A549 (cell line): ENCODE measurements at regions of chr2 and their contacts with region 1.

Region 1: GRCh38 chr2:157302492-157303099 is 23.0 kb downstream of the ERMN start:
- DNase-seq: peak; percentile 31 to 44
- ATAC-seq: peak; percentile 79 to 91; a peak in 5 of 6 replicates
- H3K4me3 ChIP-seq: no peak overlapping the region
- H3K27ac ChIP-seq: no peak overlapping the region
- H3K4me1 ChIP-seq: no peaks in the 10 kb centered on the region
- CTCF ChIP-seq: peak; percentile 93
- EP300 ChIP-seq: no peak
- POLR2A ChIP-seq: no peak
- RAD21 ChIP-seq: peak; percentile 82 to 91

Region 2: GRCh38 chr2:157269922-157270321 is 32.7 kb before region 1 on chr2:
- CTCF ChIA-PET with region 1: interaction called, 12 read pairs
- POLR2A ChIA-PET with region 1: no interaction called
- DNase-seq: no peak
- ATAC-seq: no peak
- H3K4me3 ChIP-seq: no peak overlapping the region
- H3K27ac ChIP-seq: no peak overlapping the region
- H3K4me1 ChIP-seq: no peaks in the 10 kb centered on the region
- CTCF ChIP-seq: no peak
- EP300 ChIP-seq: no peak
- POLR2A ChIP-seq: no peak
- RAD21 ChIP-seq: no peak

Region 3: GRCh38 chr2:157281316-157281715 is 21.3 kb before region 1 on chr2:
- CTCF ChIA-PET with region 1: interaction called, 13 read pairs
- POLR2A ChIA-PET with region 1: no interaction called
- DNase-seq: no peak
- ATAC-seq: no peak
- H3K4me3 ChIP-seq: no peak overlapping the region
- H3K27ac ChIP-seq: no peak overlapping the region
- H3K4me1 ChIP-seq: no peaks in the 10 kb centered on the region
- CTCF ChIP-seq: no peak
- EP300 ChIP-seq: no peak
- POLR2A ChIP-seq: no peak
- RAD21 ChIP-seq: no peak

Region 4: GRCh38 chr2:157291009-157291408 is 11.6 kb before region 1 on chr2:
- CTCF ChIA-PET with region 1: interaction called, 13 read pairs
- POLR2A ChIA-PET with region 1: no interaction called
- DNase-seq: peak in 1 of 2 experiments; percentile 65
- ATAC-seq: peak; percentile 90 to 94
- H3K4me3 ChIP-seq: no peak overlapping the region
- H3K27ac ChIP-seq: peak overlapping the region; percentile 45 to 49; a peak in 4 of 6 replicates
- H3K4me1 ChIP-seq: peaks cover 17% of the 10 kb centered on the region
- CTCF ChIP-seq: no peak
- EP300 ChIP-seq: no peak
- POLR2A ChIP-seq: no peak
- RAD21 ChIP-seq: no peak

Region 5: DNA sequence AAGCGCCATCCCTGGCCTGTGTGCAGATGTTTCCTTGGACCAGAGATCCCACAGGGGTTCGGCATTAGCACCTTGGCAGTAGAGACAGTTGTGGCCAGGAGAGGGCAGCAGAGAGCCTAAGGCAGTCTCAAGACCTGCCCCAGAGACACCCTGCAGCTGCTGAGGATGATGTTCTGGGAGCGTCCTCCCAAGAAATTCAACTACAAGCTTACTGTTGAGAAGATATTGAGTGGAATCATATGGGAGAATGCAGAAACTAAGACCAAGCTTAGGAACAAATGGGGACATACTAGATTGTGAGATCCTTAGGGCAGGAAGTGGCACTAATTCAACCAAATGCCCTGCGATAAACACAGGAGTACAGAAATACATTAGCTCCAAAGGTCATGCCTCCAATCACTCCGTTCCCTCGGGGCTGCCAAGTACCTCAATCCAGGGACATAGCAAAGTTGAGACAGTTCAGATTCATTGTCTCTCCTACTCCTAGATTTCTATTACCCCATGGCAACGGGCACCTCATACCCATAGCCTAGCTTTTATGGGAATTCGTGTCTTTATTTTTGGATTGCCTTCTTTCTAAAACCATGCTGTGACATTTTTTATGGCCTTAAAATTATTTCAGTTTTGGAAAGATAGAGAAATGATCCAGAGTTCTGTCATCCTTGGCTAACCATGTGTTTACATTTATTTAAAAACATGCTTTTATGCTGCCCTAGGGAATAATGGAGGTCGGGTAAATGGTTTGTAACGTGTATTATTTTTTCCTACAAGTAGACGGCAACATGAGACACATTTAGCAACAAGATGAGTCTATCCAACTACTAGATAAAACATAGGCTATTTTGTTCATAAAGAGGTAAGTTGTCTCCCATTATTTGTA is 25.3 kb after region 1 on chr2:
- CTCF ChIA-PET with region 1: interaction called, 101 read pairs
- POLR2A ChIA-PET with region 1: interaction called, 5 read pairs
- DNase-seq: peak; percentile 66 to 78
- ATAC-seq: peak; percentile 98 to 100
- H3K4me3 ChIP-seq: no peak overlapping the region
- H3K27ac ChIP-seq: no peak overlapping the region
- H3K4me1 ChIP-seq: peaks cover 4% of the 10 kb centered on the region; the same call in 1 of the 3 replicates
- CTCF ChIP-seq: peak; percentile 74
- EP300 ChIP-seq: no peak
- POLR2A ChIP-seq: no peak
- RAD21 ChIP-seq: peak; percentile 65 to 66

Region 6: DNA sequence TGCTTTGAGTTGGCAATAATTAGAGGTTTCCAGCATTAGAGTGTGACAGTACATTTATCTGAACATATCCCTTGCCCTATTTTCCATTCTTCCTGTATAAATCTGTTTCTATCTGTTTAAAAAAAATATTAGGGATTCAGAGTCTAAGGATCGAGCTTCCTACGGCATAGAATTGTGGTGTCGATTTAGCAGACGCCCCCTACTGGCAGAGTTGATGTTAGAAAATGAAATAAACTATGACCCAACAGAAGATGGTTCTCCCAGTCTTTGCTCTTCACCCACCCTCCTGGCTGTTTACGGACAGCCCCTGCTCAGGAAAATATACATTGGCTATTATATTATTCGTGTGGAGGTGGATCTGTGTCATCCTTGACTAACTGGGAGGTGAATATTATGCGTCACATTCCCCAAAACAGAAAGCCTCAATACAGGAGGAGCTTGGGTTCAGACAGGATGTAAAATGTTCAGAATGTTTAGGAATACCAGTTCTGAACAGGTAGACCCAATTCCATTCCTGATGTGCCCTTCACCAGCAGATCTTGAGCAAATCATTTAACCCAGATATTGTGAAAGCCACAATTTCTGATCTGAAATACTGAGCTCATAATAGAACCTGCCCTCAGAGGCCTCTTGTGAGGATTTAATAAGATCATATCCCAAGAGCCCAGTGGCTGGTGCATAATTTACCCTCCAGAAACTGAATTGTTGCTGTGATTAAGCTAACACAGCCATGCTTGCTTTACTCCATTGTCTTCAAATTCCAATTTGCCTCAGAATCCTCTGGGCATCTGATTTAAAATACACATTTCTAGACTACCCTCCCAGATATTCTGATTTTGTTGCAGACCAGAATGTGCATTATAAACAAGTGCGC is 33.8 kb after region 1 on chr2:
- CTCF ChIA-PET with region 1: interaction called, 101 read pairs
- POLR2A ChIA-PET with region 1: no interaction called
- DNase-seq: peak in 1 of 2 experiments; percentile 44
- ATAC-seq: peak; percentile 74 to 92; a peak in 5 of 6 replicates
- H3K4me3 ChIP-seq: no peak overlapping the region
- H3K27ac ChIP-seq: no peak overlapping the region
- H3K4me1 ChIP-seq: no peaks in the 10 kb centered on the region
- CTCF ChIP-seq: peak; percentile 75
- EP300 ChIP-seq: no peak
- POLR2A ChIP-seq: no peak
- RAD21 ChIP-seq: peak; percentile 26 to 35; a peak in 2 of 5 replicates

Region 7: DNA sequence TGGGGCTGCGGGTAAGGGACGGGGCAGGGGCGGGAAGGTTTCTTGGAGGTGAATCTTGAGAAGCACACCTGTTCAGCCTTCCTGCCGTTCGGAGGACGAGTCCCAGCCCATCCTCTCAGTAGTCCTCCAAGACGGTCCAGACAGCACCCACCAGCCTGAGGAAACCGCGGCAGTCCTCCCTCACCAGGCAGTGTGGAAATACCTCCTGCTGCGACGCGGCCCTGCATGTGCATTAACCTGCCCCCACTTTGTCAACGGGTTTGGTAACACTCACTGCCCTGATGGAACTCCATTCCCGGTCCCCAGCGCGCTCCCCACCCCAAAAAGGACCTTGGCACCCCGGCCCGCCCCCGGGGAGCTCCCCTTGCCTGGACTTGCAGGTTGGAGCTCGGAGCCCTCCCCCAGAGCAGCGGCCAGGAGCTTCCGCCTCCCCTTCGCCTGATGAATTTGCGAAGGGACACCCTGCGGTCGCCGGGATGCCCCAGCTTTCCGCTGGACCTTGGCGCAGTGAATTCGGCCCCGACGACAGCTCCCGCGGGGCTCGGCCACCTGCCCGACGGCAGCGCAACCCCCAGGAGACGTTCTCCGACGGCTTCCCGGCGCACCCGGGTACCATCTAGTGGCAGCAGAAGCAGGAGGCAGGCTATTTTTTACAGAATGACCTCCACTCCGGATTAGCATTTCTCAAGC is 294.5 kb after region 1 on chr2:
- CTCF ChIA-PET with region 1: interaction called, 13 read pairs
- POLR2A ChIA-PET with region 1: no interaction called
- DNase-seq: peak; percentile 7 to 9
- ATAC-seq: peak; percentile 76 to 82; a peak in 5 of 6 replicates
- H3K4me3 ChIP-seq: no peak overlapping the region
- H3K27ac ChIP-seq: no peak overlapping the region
- H3K4me1 ChIP-seq: no peaks in the 10 kb centered on the region
- CTCF ChIP-seq: peak; percentile 39
- EP300 ChIP-seq: no peak
- POLR2A ChIP-seq: no peak
- RAD21 ChIP-seq: peak; percentile 33 to 37; a peak in 4 of 5 replicates